GM13976 (cell line): ENCODE measurements at regions of chr9 and their contacts with region 1.

Region 1: GRCh38 chr9:69357030-69357775 is 32.2 kb downstream of the ENTREP1 start:
- DNase-seq: no peak
- CTCF ChIP-seq: no peak

Region 2: GRCh38 chr9:68747043-68747533 is 610.1 kb before region 1 on chr9:
- in situ Hi-C with region 1: no loop called
- DNase-seq: no peak
- CTCF ChIP-seq: no peak

Region 3: GRCh38 chr9:69066955-69067354 is 290.2 kb before region 1 on chr9:
- in situ Hi-C with region 1: loop called (anchors 25 kb)
- DNase-seq: no peak
- CTCF ChIP-seq: no peak